ENCODE measurements at regions of chr13 and their contacts with region 1.

Region 1: GRCh38 chr13:108342369-108343289 is 73.1 kb downstream of the TNFSF13B start:
- DNase-seq: peak; percentile 14
- CTCF ChIP-seq: peak; percentile 34

Region 2: GRCh38 chr13:108895220-108895704 is 552.6 kb after region 1 on chr13:
- in situ Hi-C with region 1: loop called (anchors 25 kb)
- DNase-seq: no peak
- CTCF ChIP-seq: peak; percentile 52

Measured in GM13976 (cell line).